Activated naive CD4-positive, alpha-beta T cell treated with anti-CD3 and anti-CD28 coated beads for 36 hours (primary cell): ENCODE measurements at regions of chr2 and their contacts with region 1.

Region 1: GRCh38 chr2:72745679-72746368 is 80.0 kb downstream of the EXOC6B start:
- DNase-seq: no peak
- H3K4me3 Mint-ChIP-seq: no peak overlapping the region
- H3K27ac Mint-ChIP-seq: no peak overlapping the region
- H3K4me1 Mint-ChIP-seq: peaks cover 2% of the 10 kb centered on the region
- H3K27me3 Mint-ChIP-seq: no peaks in the 10 kb centered on the region

Region 2: DNA sequence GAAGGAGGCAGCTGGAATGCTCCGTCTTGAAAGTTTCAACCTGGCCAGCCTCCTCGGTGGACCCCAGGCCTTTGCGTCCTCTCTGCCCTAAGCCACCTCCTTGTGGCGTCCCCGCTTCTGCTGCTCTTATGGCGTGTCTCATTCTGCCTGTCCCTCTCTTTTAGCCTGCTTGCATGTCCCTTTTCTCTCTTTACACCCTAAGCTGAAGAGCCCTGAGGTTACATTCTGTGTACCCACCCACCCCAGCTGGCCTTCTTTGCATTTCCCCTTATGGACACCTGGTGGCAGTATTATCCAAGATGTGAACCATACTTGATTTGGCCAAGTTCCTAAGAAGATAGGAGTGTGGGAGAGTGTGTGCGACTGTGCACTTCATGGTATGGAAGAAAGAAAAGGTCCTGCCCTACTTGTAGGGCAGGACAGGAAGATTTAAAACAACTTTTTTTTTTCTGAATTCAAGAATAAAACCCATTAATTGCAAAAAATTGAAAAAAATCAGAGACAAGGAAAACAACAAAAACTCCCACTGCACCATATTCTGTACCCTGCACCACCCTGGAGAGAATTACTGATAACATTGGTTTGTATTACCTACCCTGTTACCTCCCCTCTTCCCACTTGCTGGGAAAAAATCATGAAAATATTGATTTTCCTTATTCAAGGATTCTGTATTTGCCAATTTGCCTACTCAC is 1215.0 kb before region 1 on chr2:
- CTCF ChIA-PET with region 1: no interaction called
- intact Hi-C with region 1: loop called (anchors 5 kb)
- DNase-seq: peak; percentile 44
- H3K4me3 Mint-ChIP-seq: no peak overlapping the region
- H3K27ac Mint-ChIP-seq: no peak overlapping the region
- H3K4me1 Mint-ChIP-seq: no peaks in the 10 kb centered on the region
- H3K27me3 Mint-ChIP-seq: peaks cover 16% of the 10 kb centered on the region

Region 3: GRCh38 chr2:72605836-72606442 is 139.9 kb before region 1 on chr2:
- CTCF ChIA-PET with region 1: no interaction called
- intact Hi-C with region 1: loop called (anchors 10 kb)
- DNase-seq: no peak
- H3K4me3 Mint-ChIP-seq: no peak overlapping the region
- H3K27ac Mint-ChIP-seq: no peak overlapping the region
- H3K4me1 Mint-ChIP-seq: peaks cover 13% of the 10 kb centered on the region
- H3K27me3 Mint-ChIP-seq: no peaks in the 10 kb centered on the region

Region 4: GRCh38 chr2:72722492-72723070 is 23.2 kb before region 1 on chr2:
- CTCF ChIA-PET with region 1: no interaction called
- intact Hi-C with region 1: no loop called
- DNase-seq: no peak
- H3K4me3 Mint-ChIP-seq: no peak overlapping the region
- H3K27ac Mint-ChIP-seq: no peak overlapping the region
- H3K4me1 Mint-ChIP-seq: no peaks in the 10 kb centered on the region
- H3K27me3 Mint-ChIP-seq: no peaks in the 10 kb centered on the region